ENCODE measurements at regions of chr2 and their contacts with region 1.

Region 1: DNA sequence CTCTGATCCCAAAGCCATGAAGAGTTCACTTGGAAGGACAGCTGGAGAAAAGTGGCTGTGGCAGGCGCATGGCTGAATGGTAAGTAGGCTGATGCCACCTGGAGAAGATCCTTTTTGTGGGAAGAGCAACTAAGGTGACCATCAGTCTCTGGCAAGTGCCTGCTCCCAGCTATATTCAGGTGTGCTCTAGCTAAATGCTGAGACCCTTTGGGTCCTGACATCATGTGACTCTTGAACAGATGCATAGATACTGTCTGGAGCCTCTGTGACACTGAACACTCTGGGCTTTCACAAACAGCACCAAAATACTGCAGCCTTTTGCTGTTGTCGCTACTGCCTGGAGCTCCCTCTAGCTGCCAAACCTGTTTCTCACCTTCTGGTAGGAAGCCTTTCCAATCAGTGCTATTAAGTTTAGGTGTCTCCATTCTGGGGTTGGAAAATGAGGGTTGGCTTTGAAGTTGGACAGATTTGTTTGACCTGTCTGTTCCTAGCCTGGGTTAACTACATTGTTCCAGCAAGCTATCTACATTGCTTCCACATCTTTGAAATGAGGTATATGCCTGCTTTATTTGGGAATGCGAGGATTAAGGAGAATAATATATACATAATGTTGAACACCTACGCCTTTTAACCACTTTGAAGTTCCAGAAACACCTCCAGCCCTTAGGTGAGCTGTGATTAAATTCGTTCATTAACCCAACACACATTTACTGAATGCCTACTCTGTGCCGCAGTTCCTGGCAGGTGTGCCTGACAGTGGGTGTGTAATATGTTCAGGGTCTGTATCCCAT is 3.1 kb downstream of the EGR4 start:
- DNase-seq: no peak
- H3K4me3 ChIP-seq: no peak overlapping the region
- CTCF ChIP-seq: peak; percentile 52

Region 2: DNA sequence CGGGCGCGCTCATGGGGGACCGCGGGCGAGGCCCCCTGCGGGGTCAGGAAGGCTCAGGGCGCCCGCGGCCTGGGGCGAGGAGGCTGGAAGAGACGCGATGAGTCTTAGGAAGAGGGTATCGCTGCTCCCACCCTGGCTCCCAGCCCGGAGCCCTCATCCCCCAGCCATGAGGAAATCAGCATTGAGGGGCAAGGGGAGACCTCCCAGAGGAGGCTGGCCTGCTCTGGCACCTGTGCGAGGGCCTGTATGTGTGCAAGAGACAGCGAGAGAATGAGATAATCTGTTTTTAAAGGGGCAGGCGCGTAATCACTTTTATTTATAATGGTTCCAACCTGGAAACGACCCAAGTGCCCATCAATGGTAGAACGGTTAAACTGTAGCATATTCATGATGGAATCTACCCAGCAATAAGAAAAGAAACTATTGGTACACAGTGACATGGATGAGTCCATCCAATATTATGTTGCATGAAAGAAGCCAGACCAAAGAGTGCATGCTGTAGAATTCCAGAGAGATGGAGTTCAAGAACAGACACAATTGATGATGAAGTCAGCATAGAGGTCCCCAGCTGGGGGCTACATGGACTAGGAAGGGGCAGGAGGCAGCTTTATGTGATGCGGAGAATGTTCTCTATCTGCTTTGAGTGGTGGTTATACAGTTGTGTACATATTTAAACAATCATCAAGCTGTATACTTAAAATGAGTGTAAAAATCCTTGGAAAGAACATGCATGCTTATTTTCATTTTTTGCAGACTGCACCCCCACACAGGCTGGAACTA is 20.4 kb before region 1 on chr2:
- CTCF ChIA-PET with region 1: interaction called, 16 read pairs
- POLR2A ChIA-PET with region 1: no interaction called
- DNase-seq: no peak
- H3K4me3 ChIP-seq: no peak overlapping the region
- CTCF ChIP-seq: no peak

Region 3: DNA sequence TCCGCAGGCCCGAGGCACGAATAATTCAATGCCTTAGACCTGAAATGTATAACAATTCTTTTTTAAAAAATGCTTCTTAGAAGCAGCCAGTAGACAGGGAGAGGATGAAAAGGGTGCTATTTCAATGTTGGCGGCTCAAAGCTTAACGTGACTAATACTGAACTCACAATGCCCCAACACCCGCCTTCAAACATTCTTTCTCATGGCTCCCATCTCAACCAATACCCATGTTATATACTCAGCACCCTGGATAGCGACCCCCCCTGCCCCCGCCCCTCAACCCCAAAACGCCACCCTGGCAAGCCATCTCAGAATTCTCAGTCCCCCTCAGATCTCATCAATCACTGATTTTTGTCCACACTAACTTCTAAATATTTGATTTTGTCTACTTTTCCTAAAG is 10.4 kb before region 1 on chr2:
- CTCF ChIA-PET with region 1: interaction called, 22 read pairs
- POLR2A ChIA-PET with region 1: no interaction called
- DNase-seq: no peak
- H3K4me3 ChIP-seq: no peak overlapping the region
- CTCF ChIP-seq: no peak

Region 4: GRCh38 chr2:73561422-73561821 is 271.2 kb after region 1 on chr2:
- CTCF ChIA-PET with region 1: no interaction called
- POLR2A ChIA-PET with region 1: no interaction called
- DNase-seq: no peak
- H3K4me3 ChIP-seq: no peak overlapping the region
- CTCF ChIP-seq: no peak